Activated B cell treated with CpG ODN at 0.5 μM for 24 hours (primary cell): ENCODE measurements at regions of chr6 and their contacts with region 1.

Region 1: DNA sequence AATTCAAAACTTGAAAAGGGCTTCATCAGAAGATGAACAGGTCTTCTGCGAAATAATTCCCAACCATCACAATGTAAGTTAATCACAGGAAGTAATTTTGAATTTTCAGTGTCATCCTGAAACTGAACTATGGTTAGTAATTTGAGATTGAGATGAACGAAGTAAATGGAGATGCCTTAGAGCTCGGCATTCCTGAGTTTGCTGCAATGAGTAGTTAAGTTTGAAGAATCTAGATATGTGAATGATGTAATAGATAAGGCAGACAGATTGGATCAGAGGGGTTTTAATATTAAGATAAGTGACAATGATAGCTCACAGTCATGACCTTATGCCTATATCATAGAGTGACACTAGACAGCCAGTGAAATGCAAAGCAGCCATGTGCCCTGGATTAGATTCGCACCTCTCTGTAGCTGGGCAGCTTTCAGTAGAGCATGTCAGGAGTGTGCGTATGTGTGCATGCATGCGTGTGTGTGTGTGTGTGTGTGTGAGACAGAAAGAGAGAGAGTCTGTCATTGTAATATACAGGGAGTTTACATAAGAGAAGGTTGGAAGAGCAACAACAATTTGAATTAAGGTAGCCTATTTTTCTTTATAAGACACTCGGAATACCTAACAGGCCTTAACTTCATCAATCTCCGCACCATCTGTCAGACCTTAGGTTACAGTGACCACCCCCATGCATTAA is 233.0 kb downstream of the GMPR start:
- DNase-seq: peak; percentile 22
- ATAC-seq: peak; percentile 81
- H3K4me3 Mint-ChIP-seq: peak overlapping the region; percentile 28
- H3K27ac Mint-ChIP-seq: peak overlapping the region; percentile 88
- H3K4me1 Mint-ChIP-seq: peaks cover 69% of the 10 kb centered on the region
- H3K27me3 Mint-ChIP-seq: no peaks in the 10 kb centered on the region
- CTCF ChIP-seq: no peak

Region 2: GRCh38 chr6:16409531-16410441 is 61.6 kb before region 1 on chr6:
- CTCF ChIA-PET with region 1: interaction called, 3 read pairs
- POLR2A ChIA-PET with region 1: interaction called, 16 read pairs
- intact Hi-C with region 1: no loop called
- DNase-seq: peak; percentile 32
- ATAC-seq: peak; percentile 60
- H3K4me3 Mint-ChIP-seq: peak overlapping the region; percentile 63
- H3K27ac Mint-ChIP-seq: peak overlapping the region; percentile 37
- H3K4me1 Mint-ChIP-seq: peaks cover 66% of the 10 kb centered on the region
- H3K27me3 Mint-ChIP-seq: no peaks in the 10 kb centered on the region
- CTCF ChIP-seq: no peak

Region 3: DNA sequence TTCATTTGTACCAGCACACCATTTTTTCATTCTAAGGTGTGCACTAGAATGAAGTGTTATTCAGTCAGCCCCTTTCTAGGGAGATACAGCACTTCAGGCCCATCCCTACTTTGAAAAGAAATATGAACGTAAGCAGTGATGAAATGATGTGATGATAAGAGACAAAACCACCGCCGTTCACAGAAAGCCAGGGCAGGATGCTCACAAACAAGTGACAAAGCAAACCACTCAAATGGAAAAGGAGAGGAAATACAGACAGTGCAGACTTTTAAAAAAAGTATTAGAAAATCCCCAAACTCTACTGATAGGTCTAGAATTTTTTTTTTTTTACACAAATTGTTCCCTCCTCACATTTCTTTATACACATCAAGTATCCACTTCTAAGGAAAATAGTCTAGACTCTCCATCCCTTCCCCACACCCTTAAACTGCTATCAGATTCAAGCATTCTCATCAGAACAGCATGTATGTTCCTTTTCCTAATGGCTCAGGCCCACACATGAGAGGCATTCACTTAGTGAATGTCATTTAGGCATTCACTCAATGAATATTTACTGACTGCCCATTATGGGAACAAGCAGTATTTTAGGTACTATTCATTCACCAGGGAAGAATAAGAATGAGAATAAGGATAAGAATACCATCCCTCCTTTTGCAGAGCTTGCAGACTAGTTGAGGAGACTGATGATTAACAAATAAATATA is 10.5 kb after region 1 on chr6:
- CTCF ChIA-PET with region 1: no interaction called
- POLR2A ChIA-PET with region 1: no interaction called
- intact Hi-C with region 1: loop called (anchors 1 kb)
- DNase-seq: no peak
- ATAC-seq: peak; percentile 59
- H3K4me3 Mint-ChIP-seq: peak overlapping the region; percentile 30
- H3K27ac Mint-ChIP-seq: peak overlapping the region; percentile 57
- H3K4me1 Mint-ChIP-seq: peaks cover 40% of the 10 kb centered on the region
- H3K27me3 Mint-ChIP-seq: no peaks in the 10 kb centered on the region
- CTCF ChIP-seq: no peak

Region 4: DNA sequence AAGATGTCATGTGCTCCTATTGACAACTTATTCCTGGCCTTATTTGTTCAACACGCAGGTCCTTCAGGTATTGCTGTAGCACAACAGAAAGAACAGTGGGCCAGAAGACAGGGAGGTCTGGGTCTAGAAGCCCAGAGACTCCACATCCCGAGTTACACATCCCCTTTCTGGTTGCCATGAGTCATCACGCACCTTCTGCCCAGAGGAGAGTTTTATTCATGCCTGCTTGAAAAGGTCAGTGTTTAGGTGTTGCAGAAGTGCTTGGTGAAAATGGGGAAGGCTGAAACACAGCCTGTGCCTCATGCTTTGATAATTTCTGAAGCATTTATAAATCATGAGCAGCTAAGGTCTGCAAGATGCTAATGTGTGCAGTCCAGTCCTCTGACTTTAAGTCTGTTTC is 23.4 kb after region 1 on chr6:
- CTCF ChIA-PET with region 1: no interaction called
- POLR2A ChIA-PET with region 1: interaction called, 7 read pairs
- intact Hi-C with region 1: loop called (anchors 1 kb)
- DNase-seq: no peak
- ATAC-seq: peak; percentile 89
- H3K4me3 Mint-ChIP-seq: peak overlapping the region; percentile 17
- H3K27ac Mint-ChIP-seq: peak overlapping the region; percentile 60
- H3K4me1 Mint-ChIP-seq: peaks cover 39% of the 10 kb centered on the region
- H3K27me3 Mint-ChIP-seq: no peaks in the 10 kb centered on the region
- CTCF ChIP-seq: no peak

Region 5: GRCh38 chr6:16503970-16504415 is 32.6 kb after region 1 on chr6:
- CTCF ChIA-PET with region 1: interaction called, 3 read pairs
- POLR2A ChIA-PET with region 1: interaction called, 12 read pairs
- intact Hi-C with region 1: loop called (anchors 2 kb)
- DNase-seq: no peak
- ATAC-seq: peak; percentile 75
- H3K4me3 Mint-ChIP-seq: peak overlapping the region; percentile 46
- H3K27ac Mint-ChIP-seq: peak overlapping the region; percentile 80
- H3K4me1 Mint-ChIP-seq: peaks cover 42% of the 10 kb centered on the region
- H3K27me3 Mint-ChIP-seq: no peaks in the 10 kb centered on the region
- CTCF ChIP-seq: no peak

Region 6: DNA sequence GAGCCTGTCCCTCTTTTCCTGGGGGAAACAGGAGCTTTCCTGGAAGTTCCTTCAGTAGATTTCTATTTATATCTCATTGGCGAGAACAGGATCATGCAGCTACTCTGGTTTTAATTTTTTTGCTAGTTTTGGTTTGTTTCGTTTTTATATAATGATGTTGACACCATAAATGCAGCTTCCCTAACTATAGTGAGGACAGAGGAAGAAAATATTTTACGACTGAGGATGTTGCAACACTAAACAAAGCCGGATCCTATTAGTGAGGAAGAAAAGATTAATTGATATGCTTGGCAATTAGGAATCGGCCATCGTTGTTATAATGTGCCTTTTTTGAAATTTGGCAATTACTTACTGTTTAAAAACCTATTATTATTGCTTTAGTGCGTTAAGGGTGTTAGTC is 1700.5 kb after region 1 on chr6:
- CTCF ChIA-PET with region 1: no interaction called
- POLR2A ChIA-PET with region 1: no interaction called
- intact Hi-C with region 1: no loop called
- DNase-seq: no peak
- ATAC-seq: no peak
- H3K4me3 Mint-ChIP-seq: no peak overlapping the region
- H3K27ac Mint-ChIP-seq: no peak overlapping the region
- H3K4me1 Mint-ChIP-seq: peaks cover 10% of the 10 kb centered on the region
- H3K27me3 Mint-ChIP-seq: no peaks in the 10 kb centered on the region
- CTCF ChIP-seq: no peak